ENCODE measurements at regions of chr10 and their contacts with region 1.

Region 1: GRCh38 chr10:58414270-58415041 is 29.2 kb downstream of the TFAM start:
- DNase-seq: peak in 3 of 5 donors; percentile 11 to 31 (median 29)
- H3K4me3 ChIP-seq: no peak overlapping the region
- H3K27ac ChIP-seq: no peak overlapping the region
- H3K4me1 ChIP-seq: no peaks in the 10 kb centered on the region
- H3K27me3 ChIP-seq: no peaks in the 10 kb centered on the region
- CTCF ChIP-seq: peak; percentile 19 to 73 (median 66)
- EP300 ChIP-seq: no peak
- POLR2A ChIP-seq: no peak

Region 2: GRCh38 chr10:58360391-58361004 is 54.0 kb before region 1 on chr10:
- intact Hi-C with region 1: no loop called
- DNase-seq: no peak
- H3K4me3 ChIP-seq: no peak overlapping the region
- H3K27ac ChIP-seq: no peak overlapping the region
- H3K4me1 ChIP-seq: no peaks in the 10 kb centered on the region
- H3K27me3 ChIP-seq: no peaks in the 10 kb centered on the region
- CTCF ChIP-seq: no peak
- EP300 ChIP-seq: no peak
- POLR2A ChIP-seq: no peak

Region 3: GRCh38 chr10:58641095-58641531 is 226.7 kb after region 1 on chr10:
- intact Hi-C with region 1: loop called in 2 of 4 experiments (anchors 10 kb)
- DNase-seq: peak in 2 of 5 donors; percentile 23 to 30
- H3K4me3 ChIP-seq: no peak overlapping the region
- H3K27ac ChIP-seq: peak overlapping the region in 1 of 2 donors; percentile 21
- H3K4me1 ChIP-seq: peaks cover 5% of the 10 kb centered on the region
- H3K27me3 ChIP-seq: no peaks in the 10 kb centered on the region
- CTCF ChIP-seq: no peak
- EP300 ChIP-seq: no peak
- POLR2A ChIP-seq: no peak